Naive thymus-derived CD4-positive, alpha-beta T cell (primary cell): ENCODE measurements at regions of chrX and their contacts with region 1.

Region 1: DNA sequence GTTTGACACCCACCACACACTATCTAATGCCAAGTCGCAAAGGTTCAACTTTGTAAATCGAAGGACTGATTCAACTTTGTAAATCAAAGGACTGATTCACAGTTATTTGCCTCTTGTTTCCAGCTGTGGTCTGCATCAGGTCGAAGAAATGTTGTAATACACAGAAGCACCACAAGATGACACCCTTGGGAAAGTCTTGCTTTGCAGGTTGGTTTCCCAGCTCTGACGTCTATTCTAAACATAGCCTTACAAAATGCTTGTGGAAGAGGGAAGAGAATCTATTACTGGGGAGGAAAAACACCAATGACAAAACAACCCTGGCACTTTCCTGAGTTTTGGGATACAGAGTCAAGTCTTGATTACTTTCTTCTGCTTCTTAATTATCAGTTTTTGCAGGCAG is 35.3 kb downstream of the SUPT20HL1 start:
- DNase-seq: peak in 8 of 9 donors; percentile 20 to 62 (median 50)
- ATAC-seq: peak; percentile 87
- H3K4me3 ChIP-seq: no peak overlapping the region
- H3K4me3 Mint-ChIP-seq: no peak overlapping the region
- H3K27ac ChIP-seq: no peak overlapping the region
- H3K27ac Mint-ChIP-seq: peak overlapping the region in 1 of 9 donors; percentile 51
- H3K4me1 ChIP-seq: no peaks in the 10 kb centered on the region
- H3K4me1 Mint-ChIP-seq: peaks cover 0 to 7% (median 0%) of the 10 kb centered on the region in 7 donors
- H3K27me3 ChIP-seq: no peaks in the 10 kb centered on the region
- H3K27me3 Mint-ChIP-seq: peaks cover 0 to 5% (median 2%) of the 10 kb centered on the region in 5 donors

Region 2: GRCh38 chrX:24464836-24465531 is 69.2 kb after region 1 on chrX and contains the start of gene PDK3:
- CTCF ChIA-PET with region 1: interaction called, 4 read pairs
- POLR2A ChIA-PET with region 1: interaction called, 7 read pairs
- intact Hi-C with region 1: loop called in 1 of 2 experiments (anchors 1 kb)
- DNase-seq: peak; percentile 81 to 92 (median 89)
- ATAC-seq: peak; percentile 98
- H3K4me3 ChIP-seq: peak within 1 kb of the TSS; percentile 70
- H3K4me3 Mint-ChIP-seq: peak within 1 kb of the TSS; percentile 48 to 90 (median 85)
- H3K27ac ChIP-seq: peak within 1 kb of the TSS; percentile 92
- H3K27ac Mint-ChIP-seq: peak within 1 kb of the TSS; percentile 77 to 97 (median 93)
- H3K4me1 ChIP-seq: peaks cover 14 to 24% of the 10 kb centered on the region in 2 donors
- H3K4me1 Mint-ChIP-seq: peaks cover 7 to 37% (median 33%) of the 10 kb centered on the region in 7 donors
- H3K27me3 ChIP-seq: no peaks in the 10 kb centered on the region
- H3K27me3 Mint-ChIP-seq: no peaks in the 10 kb centered on the region
- total RNA-seq, gene PDK3: 17.4 to 29.4 (median 28.5) TPM

Region 3: DNA sequence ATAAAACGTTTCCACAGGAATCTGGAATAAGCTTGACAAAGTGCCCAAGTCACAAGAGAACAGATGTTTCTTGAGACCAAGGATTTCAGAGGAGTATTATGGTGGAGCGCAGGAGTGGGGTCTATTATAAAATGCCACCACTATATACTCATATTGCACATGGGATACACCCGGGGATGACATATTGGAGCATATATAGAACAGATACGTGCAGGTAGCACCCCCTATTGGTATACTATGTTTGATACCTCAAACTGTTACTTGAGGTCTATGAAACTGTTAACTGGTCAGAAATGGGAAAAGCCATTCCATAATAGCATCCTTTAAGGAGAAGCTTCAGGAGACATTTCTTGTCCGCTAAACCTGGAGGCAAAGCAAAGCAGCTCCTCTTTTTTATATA is 165.3 kb after region 1 on chrX:
- CTCF ChIA-PET with region 1: no interaction called
- POLR2A ChIA-PET with region 1: no interaction called
- intact Hi-C with region 1: loop called in 1 of 2 experiments (anchors 1 kb)
- DNase-seq: no peak
- ATAC-seq: no peak
- H3K4me3 ChIP-seq: no peak overlapping the region
- H3K4me3 Mint-ChIP-seq: no peak overlapping the region
- H3K27ac ChIP-seq: no peak overlapping the region
- H3K27ac Mint-ChIP-seq: no peak overlapping the region
- H3K4me1 ChIP-seq: no peaks in the 10 kb centered on the region
- H3K4me1 Mint-ChIP-seq: no peaks in the 10 kb centered on the region
- H3K27me3 ChIP-seq: no peaks in the 10 kb centered on the region
- H3K27me3 Mint-ChIP-seq: no peaks in the 10 kb centered on the region

Region 4: DNA sequence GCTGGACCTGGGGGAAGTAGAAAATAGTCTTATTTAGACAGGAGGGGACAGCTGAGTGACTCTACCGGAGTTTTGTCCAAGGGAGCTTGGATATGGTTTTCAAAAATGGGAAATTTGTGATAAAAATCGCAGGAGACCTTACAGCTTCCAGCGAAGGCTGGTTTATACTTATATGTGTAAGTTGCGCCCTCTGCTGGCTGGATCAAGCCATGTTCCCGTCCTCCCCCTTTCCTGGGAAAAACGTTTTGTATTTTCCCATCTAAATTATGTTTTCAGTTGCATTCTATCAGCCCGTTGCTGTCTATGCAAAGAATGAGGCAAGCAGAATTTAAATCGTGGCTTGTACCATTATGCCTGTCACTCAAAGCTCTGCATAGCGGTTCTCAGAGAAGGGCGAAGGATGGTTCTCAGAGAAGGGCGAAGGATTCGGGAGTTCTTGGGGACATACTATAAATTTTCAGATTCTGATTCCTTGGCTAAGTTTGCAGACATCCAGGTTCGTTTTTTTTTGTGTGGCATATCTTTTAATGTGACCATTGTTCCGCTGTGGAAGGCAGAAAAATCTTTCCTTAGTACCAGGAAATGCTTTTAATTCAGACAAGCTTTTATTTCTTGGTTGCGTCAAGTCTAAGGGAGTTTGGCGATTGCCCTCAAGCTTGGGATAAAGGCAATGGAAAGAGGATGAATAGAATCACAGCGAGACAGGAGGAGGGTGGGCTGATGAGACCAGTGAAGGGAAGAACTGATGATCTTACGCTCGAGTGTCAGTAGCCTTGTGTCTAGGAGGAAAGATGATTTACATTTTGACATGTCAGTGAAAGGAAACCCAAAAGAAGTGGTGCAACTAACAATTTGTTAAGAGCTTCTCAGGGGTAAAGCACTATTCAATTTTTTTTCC is 748.5 kb after region 1 on chrX:
- CTCF ChIA-PET with region 1: interaction called, 3 read pairs
- POLR2A ChIA-PET with region 1: no interaction called
- intact Hi-C with region 1: loop called in 1 of 2 experiments (anchors 10 kb)
- DNase-seq: peak in 6 of 9 donors; percentile 5 to 23 (median 12)
- ATAC-seq: no peak
- H3K4me3 ChIP-seq: no peak overlapping the region
- H3K4me3 Mint-ChIP-seq: peak overlapping the region in 1 of 10 donors; percentile 14
- H3K27ac ChIP-seq: no peak overlapping the region
- H3K27ac Mint-ChIP-seq: no peak overlapping the region
- H3K4me1 ChIP-seq: no peaks in the 10 kb centered on the region
- H3K4me1 Mint-ChIP-seq: peaks cover 0 to 7% (median 0%) of the 10 kb centered on the region in 7 donors
- H3K27me3 ChIP-seq: no peaks in the 10 kb centered on the region
- H3K27me3 Mint-ChIP-seq: peaks cover under 1 to 15% (median 5%) of the 10 kb centered on the region in 5 donors